ENCODE measurements at regions of chr5 and their contacts with region 1.

Region 1: DNA sequence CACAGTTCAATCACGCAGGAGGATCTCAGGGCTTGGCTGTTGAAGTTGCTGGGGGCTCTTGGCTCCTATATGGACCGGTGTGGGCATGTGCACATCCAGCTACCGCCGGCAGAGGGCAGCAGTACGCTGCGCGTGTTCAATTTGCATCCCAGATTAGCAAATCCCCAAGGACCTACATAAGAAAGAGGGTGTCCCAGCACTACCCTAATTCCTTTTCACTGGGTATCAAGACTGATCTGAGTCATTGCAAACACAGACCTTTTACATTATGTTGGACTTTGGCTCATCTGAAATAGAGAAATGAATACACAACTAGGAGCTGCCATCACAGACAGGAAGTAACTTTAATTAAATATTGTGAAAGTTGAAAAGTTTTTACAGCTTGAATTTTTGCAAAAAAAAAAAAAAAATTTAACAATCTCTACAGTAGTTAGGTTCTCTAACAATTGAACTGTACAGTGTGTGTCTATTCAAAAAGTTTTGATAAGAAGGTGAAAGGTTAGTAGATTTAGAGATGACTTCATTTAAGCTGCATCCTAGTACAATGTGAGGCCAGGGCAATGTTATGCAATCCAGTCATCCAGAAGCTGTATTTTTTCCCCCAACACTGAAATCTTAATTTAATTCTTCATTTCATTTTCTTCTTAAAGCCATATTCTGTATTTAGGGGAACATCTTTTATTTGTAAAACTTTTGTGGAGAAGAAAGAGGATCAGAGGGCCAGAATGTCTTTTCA is 404.0 kb downstream of the EBF1 start:
- DNase-seq: peak; percentile 34
- H3K4me3 ChIP-seq: no peak overlapping the region
- H3K27ac ChIP-seq: no peak overlapping the region
- H3K4me1 ChIP-seq: no peaks in the 10 kb centered on the region
- H3K27me3 ChIP-seq: no peaks in the 10 kb centered on the region
- CTCF ChIP-seq: peak; percentile 86 to 91 (median 89)
- POLR2A ChIP-seq: no peak

Region 2: DNA sequence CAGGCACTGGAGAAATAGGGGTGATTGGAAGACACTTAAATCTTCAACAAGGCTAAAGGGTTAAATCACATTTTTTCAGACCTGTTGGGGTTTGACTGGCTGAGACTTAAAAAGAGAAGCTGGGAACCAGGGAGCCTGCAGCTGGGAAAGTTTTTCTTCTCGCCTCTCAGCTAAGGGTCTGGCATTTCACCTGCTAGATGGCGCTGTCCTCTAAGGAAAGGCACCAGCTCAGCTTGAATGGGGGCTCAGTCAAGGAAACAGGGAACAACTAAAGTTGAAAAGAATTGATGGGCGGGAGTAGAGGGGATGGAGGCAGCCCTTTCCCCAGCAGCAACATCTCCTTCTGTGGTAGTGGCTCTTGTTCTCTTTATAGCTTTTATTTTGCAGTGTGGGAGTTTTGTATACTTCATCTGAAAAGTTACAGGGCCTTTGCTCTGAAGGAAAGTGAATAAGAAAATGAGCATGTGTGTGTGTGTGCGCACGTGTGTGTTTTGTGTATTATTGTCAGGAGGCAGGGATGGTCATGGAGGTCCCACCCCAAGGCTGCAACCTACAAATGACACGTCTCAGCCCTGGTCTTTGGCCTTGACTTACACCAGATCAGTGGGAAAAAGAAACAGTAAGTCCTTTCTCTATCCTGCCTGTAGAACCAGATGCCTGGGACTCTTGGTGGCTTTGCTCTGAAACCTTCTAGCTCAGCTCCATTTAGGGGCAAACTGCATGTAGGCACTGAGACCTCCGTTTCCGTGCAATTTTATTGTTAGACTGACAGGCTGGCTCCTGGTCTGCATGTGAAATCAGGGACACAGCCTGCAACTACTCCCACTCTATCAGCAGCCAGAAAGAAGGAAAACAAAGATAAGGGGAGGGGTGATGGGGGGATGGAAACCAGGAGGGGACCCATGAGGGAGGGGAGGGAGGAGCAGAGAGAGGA is 520.6 kb before region 1 on chr5:
- intact Hi-C with region 1: loop called (anchors 5 kb)
- DNase-seq: peak; percentile 55
- H3K4me3 ChIP-seq: no peak overlapping the region
- H3K27ac ChIP-seq: peak overlapping the region in 1 of 2 donors; percentile 33
- H3K4me1 ChIP-seq: peaks cover 4% of the 10 kb centered on the region
- H3K27me3 ChIP-seq: no peaks in the 10 kb centered on the region
- CTCF ChIP-seq: peak; percentile 19 to 70 (median 61)
- POLR2A ChIP-seq: no peak

Region 3: GRCh38 chr5:159050316-159051143 is 354.8 kb after region 1 on chr5:
- intact Hi-C with region 1: loop called (anchors 5 kb)
- DNase-seq: no peak
- H3K4me3 ChIP-seq: no peak overlapping the region
- H3K27ac ChIP-seq: peak overlapping the region; percentile 62 to 63
- H3K4me1 ChIP-seq: no peaks in the 10 kb centered on the region
- H3K27me3 ChIP-seq: peaks cover 6% of the 10 kb centered on the region
- CTCF ChIP-seq: no peak
- POLR2A ChIP-seq: no peak

Region 4: DNA sequence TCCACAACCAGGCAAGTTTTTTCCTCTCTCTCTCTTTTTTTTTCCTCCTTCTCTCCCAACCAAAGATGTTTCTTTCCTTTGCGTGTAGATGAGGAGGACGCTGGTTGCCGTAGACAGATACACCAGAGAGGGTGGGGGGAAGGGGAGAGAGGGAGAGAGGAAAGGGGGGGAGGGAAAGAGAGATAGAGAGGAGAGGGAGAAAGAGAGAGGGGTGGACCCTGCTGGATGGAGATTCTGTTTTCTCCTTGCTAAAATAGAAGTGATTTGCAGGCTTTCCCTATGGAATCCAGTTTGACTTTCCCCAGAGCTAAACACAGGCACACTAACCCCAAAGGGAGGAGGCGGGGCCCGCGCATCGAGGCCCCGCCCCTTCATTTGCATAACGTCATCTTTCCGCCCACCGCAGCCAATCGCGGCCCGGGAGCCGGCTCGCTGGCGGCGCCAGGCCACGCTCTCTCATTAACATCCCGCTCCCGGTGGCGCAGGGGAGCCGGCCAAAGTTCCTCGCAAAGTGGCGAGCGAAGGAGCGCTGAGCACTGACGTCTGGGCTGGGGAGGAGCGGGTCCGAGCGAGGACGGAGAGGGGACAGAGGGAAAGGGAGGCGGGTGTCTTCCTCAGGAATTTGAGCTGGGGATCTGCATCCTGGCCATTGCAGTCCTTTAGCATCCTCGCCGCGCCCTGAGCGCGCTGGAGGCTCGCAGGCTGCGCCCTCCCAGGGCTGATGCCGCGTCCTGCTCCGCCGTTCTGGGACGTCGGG is 404.4 kb after region 1 on chr5:
- intact Hi-C with region 1: loop called (anchors 2 kb)
- DNase-seq: peak; percentile 51
- H3K4me3 ChIP-seq: peak overlapping the region; percentile 28 to 35
- H3K27ac ChIP-seq: peak overlapping the region; percentile 58 to 68
- H3K4me1 ChIP-seq: no peaks in the 10 kb centered on the region
- H3K27me3 ChIP-seq: peaks cover 40% of the 10 kb centered on the region
- CTCF ChIP-seq: no peak
- POLR2A ChIP-seq: peak; percentile 59

Region 5: GRCh38 chr5:159106569-159107282 is 411.0 kb after region 1 on chr5:
- intact Hi-C with region 1: loop called (anchors 1 kb)
- DNase-seq: no peak
- H3K4me3 ChIP-seq: no peak overlapping the region
- H3K27ac ChIP-seq: no peak overlapping the region
- H3K4me1 ChIP-seq: no peaks in the 10 kb centered on the region
- H3K27me3 ChIP-seq: peaks cover 15% of the 10 kb centered on the region
- CTCF ChIP-seq: peak; percentile 61 to 84 (median 76)
- POLR2A ChIP-seq: no peak